ENCODE measurements at regions of chr1 and their contacts with region 1.

Region 1: GRCh38 chr1:27603681-27604578 is at the start of gene AHDC1:
- DNase-seq: peak; percentile 91
- H3K4me3 Mint-ChIP-seq: peak within 1 kb of the TSS; percentile 90
- H3K27ac Mint-ChIP-seq: peak within 1 kb of the TSS; percentile 63
- H3K4me1 Mint-ChIP-seq: peaks cover 30% of the 10 kb centered on the region
- H3K27me3 Mint-ChIP-seq: no peaks in the 10 kb centered on the region
- CTCF ChIP-seq: no peak
- total RNA-seq, gene AHDC1: 18.4 and 25.2 TPM in 2 replicates

Region 2: DNA sequence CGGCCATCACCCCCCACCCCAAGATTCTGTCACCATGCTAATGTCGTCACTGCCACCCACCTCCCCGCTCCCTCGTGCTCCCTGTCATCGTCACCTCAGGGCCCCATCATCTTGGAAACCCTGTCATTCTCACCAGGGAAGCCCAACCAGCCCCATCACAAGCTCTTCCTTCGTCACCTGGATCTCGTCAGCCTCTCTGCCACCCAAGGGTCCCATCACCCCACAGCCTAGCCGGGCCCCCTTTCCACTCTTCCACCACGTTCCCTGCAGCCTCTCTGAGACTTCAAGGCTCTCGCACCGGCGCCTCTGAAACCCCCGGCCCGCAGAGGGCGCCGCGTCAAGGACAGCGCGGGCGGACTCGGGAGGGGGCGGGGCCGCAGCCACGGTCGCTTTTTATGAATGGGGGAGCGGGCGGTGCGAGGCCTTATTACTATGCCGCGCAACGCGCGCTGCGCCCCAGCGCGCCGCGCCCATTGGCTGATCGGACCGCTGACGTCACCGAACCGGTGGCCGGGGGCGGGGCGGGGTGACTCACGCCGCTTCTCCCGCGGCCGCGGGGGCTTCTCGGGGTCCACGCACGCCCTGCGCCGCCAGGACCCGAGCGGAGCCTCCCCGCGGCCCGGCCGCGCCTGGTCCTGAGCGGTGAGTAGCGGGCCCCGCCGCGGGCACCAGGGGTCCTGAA is 211.7 kb before region 1 on chr1 and contains the start of gene GPR3:
- CTCF ChIA-PET with region 1: interaction called, 24 read pairs
- POLR2A ChIA-PET with region 1: interaction called, 3 read pairs
- intact Hi-C with region 1: loop called (anchors 2 kb)
- DNase-seq: peak; percentile 90
- H3K4me3 Mint-ChIP-seq: peak within 1 kb of the TSS; percentile 72
- H3K27ac Mint-ChIP-seq: peak within 1 kb of the TSS; percentile 53
- H3K4me1 Mint-ChIP-seq: peaks cover 18% of the 10 kb centered on the region
- H3K27me3 Mint-ChIP-seq: no peaks in the 10 kb centered on the region
- CTCF ChIP-seq: peak; percentile 53
- total RNA-seq, gene GPR3: 0.47 and 0.65 TPM in 2 replicates

Region 3: GRCh38 chr1:27489910-27490741 is 113.8 kb before region 1 on chr1 and contains the start of gene WASF2:
- CTCF ChIA-PET with region 1: interaction called, 4 read pairs
- POLR2A ChIA-PET with region 1: interaction called, 13 read pairs
- intact Hi-C with region 1: no loop called
- DNase-seq: peak; percentile 96
- H3K4me3 Mint-ChIP-seq: peak within 1 kb of the TSS; percentile 85
- H3K27ac Mint-ChIP-seq: peak within 1 kb of the TSS; percentile 100
- H3K4me1 Mint-ChIP-seq: peaks cover 14% of the 10 kb centered on the region
- H3K27me3 Mint-ChIP-seq: no peaks in the 10 kb centered on the region
- CTCF ChIP-seq: no peak
- total RNA-seq, gene WASF2: 131 and 154 TPM in 2 replicates

Region 4: GRCh38 chr1:27574871-27575831 is 28.8 kb before region 1 on chr1:
- CTCF ChIA-PET with region 1: interaction called, 9 read pairs
- POLR2A ChIA-PET with region 1: interaction called, 4 read pairs
- intact Hi-C with region 1: loop called (anchors 2 kb)
- DNase-seq: peak; percentile 71
- H3K4me3 Mint-ChIP-seq: peak overlapping the region; percentile 53
- H3K27ac Mint-ChIP-seq: no peak overlapping the region
- H3K4me1 Mint-ChIP-seq: peaks cover 38% of the 10 kb centered on the region
- H3K27me3 Mint-ChIP-seq: no peaks in the 10 kb centered on the region
- CTCF ChIP-seq: peak; percentile 19

Region 5: GRCh38 chr1:27656157-27656893 is 52.4 kb after region 1 on chr1:
- CTCF ChIA-PET with region 1: interaction called, 160 read pairs
- POLR2A ChIA-PET with region 1: interaction called, 19 read pairs
- intact Hi-C with region 1: no loop called
- DNase-seq: peak; percentile 64
- H3K4me3 Mint-ChIP-seq: no peak overlapping the region
- H3K27ac Mint-ChIP-seq: no peak overlapping the region
- H3K4me1 Mint-ChIP-seq: peaks cover 38% of the 10 kb centered on the region
- H3K27me3 Mint-ChIP-seq: no peaks in the 10 kb centered on the region
- CTCF ChIP-seq: no peak

Region 6: GRCh38 chr1:27725374-27726173 is 121.6 kb after region 1 on chr1 and contains the start of gene FAM76A:
- CTCF ChIA-PET with region 1: interaction called, 10 read pairs
- POLR2A ChIA-PET with region 1: no interaction called
- intact Hi-C with region 1: no loop called
- DNase-seq: peak; percentile 98
- H3K4me3 Mint-ChIP-seq: peak within 1 kb of the TSS; percentile 88
- H3K27ac Mint-ChIP-seq: peak within 1 kb of the TSS; percentile 100
- H3K4me1 Mint-ChIP-seq: peaks cover 11% of the 10 kb centered on the region
- H3K27me3 Mint-ChIP-seq: peaks cover 3% of the 10 kb centered on the region
- CTCF ChIP-seq: peak; percentile 23
- total RNA-seq, gene FAM76A: 9.7 and 9.9 TPM in 2 replicates

Measured in MCF 10A (cell line).